Head of caudate nucleus (tissue), 42 donors: ENCODE measurements at regions of chr6 and their contacts with region 1.

Region 1: DNA sequence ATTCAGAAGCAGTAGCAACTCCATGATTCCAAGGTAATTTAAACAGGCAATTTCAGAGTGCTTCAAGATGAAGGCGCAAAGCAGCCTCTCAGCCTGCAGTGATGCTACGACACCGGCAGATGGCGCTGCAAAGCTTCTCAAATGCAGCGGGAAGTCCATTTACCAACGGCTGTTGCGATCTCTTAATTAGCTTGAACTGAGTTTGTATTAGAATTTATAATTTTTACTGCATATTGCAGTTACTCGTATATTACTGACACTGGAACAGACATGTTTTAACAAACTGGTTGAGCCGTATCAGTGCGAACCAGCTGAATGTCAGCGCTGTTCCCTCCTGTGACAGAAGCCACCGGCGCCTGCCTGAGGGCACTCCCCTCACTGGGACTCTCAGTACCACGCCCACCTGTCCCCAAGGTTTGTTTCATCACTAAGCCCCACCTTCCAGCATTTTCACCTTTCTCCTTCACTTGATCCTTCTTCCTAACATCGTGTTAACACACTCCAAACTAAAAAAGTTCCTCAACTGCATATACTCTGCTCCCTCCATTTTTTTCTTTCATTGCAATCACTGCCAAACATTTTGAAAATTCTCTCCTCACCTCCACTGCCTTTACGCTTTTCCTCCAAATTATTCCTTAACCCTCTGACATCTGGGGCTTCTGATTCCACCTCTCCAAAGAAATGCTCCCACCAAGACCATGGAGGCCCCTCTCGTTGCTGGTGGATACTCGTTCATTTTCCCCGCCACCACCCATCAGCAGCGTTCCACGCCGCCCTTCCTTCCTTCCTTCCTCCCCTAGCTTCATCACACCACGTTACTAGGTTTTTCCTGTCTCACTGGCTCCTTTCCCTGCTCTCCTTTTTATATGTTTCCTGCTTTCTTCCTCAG is 14.5 kb downstream of the GNL1 start:
- DNase-seq: peak; percentile 65 to 91 (median 81)

Region 2: GRCh38 chr6:30326526-30327260 is 215.1 kb before region 1 on chr6 and contains the start of gene TRIM39:
- intact Hi-C with region 1: no loop called
- DNase-seq: peak; percentile 68 to 95 (median 90)

Region 3: DNA sequence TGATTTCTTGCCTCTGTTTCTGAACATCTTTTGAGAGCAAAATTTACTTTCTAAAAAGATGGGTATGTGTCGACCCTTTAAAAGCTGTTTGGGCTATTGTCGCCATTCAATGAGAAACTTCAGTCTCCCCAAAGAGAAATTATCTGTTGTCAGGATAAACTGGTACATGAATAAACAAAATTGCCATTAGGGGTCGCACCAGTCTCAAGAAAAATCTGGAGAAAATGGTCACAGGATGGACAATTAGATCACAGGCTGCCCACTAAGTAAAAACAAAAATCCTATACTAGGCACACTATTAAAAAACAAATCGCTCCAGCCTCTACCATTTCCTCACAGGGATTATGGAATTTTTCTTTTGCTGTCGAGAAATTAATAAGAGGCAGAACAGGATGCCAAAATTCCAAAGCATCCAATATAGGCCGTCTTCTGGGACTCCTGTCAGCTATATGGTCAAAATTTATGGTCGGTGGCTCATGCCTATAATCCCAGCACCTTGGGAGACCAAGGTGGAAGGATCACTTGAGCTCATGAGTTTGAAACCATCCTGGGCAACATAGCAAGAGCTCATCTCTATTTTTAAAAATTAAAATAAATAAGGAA is 58.0 kb before region 1 on chr6:
- intact Hi-C with region 1: loop called (anchors 5 kb)
- DNase-seq: peak in 12 of 42 donors; percentile 19 to 77 (median 46)

Region 4: DNA sequence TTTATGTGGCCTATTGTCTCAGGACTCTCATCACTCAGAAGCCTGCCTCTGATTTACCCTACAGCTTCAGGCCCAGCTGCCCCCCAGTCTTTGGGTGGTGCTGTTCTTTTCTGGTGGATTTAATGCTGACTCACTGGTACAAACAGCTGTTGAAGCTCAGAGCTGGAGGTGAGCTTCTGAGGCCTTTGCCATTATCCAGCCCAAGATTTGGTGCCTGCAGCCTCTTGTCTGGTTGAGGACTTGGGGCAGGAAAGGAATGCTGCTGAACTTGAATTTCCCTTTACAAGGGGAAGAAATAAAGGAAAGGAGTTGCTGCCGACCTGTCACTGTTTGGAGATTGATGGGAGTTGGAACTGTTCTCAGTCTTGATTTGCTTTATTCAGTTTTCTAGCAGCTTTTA is 49.2 kb after region 1 on chr6:
- intact Hi-C with region 1: loop called (anchors 10 kb)
- DNase-seq: no peak

Region 5: DNA sequence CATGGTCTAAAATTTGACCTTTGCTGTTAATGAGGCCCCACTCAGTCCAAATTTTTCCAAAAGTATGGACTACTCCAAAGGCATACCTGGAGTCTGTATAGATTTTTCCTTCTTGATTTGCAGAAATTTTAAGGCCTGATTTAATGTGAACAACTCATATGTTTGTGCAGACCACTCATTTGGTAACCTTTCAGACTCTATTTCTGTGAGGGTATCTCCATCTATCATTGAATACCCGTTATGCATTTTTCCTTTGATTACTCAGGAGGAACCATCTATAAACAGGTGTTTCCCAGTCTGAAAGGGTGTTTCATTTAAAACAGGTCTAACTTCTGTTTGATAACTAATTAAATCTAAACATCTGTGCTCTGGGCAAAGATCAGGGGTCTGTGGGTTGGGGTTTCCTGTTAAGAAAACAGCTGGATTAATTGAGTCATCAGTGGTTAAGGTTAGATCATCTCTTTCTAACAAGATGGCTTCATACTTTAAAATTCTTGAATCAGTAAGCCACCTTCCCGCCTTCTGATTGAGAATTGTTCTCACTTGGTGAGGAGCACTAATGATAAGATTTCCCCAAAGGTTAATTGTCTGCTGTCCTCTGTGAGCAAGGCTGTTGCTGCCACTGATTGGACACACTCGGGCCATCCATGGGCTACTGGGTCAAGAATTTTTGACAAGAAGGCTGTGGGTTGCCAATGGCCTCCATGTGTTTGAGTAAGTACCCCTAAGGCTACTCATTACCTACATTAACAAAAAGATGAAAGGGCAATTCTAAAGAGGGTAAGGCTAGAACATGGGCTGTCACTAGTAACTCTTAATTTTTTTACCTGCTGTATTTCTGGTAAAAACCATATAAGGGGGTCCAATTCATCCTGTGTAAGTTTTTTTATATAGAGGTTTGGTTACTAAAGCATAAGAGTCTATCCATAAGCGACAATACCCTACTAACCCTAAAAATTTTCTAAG is 791.2 kb after region 1 on chr6:
- intact Hi-C with region 1: no loop called
- DNase-seq: no peak